MCF 10A (cell line): ENCODE measurements at regions of chr2 and their contacts with region 1.

Region 1: DNA sequence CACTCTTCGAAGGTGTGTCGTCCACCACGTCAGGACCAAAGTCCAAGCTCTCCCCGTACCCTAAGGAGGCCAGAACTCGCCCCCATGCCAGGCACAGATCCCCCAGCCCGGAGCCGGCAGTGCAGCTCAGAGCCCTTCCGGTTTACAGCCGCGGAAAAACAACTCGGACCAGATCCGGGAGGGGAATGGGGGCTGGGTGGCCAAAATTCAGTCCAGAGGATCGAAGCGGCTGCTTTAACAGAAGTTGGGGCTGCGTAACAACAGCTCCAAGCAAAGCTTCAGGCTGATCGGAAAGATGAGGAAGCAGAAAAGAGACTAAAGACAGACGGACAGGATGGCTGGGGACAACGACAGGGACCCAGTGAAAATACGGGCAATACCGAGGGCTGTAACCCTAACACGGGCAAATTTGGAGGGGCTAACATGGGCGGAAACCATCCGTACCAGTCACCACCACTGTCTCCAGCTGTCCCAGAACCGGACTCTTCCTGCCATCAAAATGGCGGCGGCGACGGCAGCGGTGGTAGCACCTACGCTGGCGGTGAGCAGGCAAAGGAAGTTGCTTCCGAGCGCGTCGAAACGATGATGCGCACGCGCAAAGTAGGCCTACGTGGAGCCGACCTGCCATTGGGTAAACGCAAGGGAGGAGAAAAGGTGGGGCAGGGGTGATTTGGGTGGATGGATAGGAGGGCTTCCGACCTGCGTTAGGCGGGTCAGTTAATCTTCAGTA is at the start of gene MMADHC:
- DNase-seq: peak; percentile 95
- H3K4me3 Mint-ChIP-seq: peak within 1 kb of the TSS; percentile 93
- H3K27ac Mint-ChIP-seq: peak within 1 kb of the TSS; percentile 99
- H3K4me1 Mint-ChIP-seq: peaks cover 21% of the 10 kb centered on the region
- H3K27me3 Mint-ChIP-seq: no peaks in the 10 kb centered on the region
- CTCF ChIP-seq: no peak
- total RNA-seq, gene MMADHC: 151 and 156 TPM in 2 replicates

Region 2: DNA sequence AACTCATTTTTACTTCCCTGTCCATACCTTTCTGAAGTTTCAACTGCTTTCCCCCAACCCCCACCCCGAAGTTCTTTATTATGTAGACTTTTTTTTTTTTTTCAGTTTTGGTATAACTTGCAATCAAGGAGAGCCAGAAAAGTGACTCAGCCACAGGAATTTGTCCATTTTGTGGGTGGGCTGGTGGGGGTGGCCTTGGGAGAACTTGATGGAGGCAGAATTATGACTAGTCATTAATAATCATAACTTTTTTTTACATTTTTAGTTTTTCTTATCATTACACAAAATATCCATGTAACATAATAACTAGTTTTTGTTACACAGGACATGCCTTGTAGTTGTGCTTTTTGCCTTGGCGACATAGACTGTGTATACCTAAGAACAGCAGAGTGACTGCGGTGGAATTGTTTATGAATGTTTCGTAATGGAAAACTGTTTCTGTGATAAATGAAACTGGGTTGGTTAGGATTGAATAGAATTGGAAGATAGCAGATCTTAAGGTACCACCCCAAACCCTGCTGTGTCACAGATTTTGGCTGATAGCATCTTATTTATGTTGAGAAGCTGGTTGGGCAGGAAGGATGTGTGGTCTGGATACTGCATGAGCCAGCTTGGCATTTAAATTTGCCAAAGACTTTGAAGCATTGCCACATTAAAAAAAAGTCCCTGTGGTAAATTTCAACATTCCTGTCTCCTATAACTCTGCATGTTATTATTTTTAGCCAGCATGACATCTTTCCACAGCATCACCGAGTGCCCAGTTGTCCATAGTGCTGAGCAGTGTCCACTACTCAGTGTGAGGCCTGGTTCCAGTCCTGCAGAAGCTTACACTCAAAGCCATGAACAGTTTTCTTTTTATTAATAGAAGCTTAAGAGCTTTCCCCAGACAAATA is 518.1 kb before region 1 on chr2:
- CTCF ChIA-PET with region 1: no interaction called
- POLR2A ChIA-PET with region 1: no interaction called
- intact Hi-C with region 1: no loop called
- DNase-seq: peak; percentile 59
- H3K4me3 Mint-ChIP-seq: no peak overlapping the region
- H3K27ac Mint-ChIP-seq: no peak overlapping the region
- H3K4me1 Mint-ChIP-seq: peaks cover 13% of the 10 kb centered on the region
- H3K27me3 Mint-ChIP-seq: no peaks in the 10 kb centered on the region
- CTCF ChIP-seq: no peak

Region 3: DNA sequence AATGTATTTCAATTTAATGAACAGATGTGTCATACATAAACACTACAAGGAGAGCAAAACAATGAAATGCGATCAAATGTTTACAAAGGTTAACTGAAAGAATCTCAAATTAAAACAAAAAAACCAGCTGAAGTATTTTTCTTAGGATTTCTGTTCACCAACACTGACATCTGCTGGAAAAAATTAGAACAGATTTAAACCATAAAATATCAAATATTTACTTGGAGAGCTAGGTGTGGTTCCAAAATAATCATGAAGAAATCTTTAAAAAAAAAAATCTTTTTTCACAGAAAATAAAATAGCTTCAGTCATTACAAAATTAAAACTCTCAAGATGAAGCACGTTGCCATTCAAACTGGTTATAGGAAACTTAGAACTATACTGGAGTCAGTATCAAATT is 13.6 kb before region 1 on chr2:
- CTCF ChIA-PET with region 1: interaction called, 7 read pairs
- POLR2A ChIA-PET with region 1: interaction called, 16 read pairs
- intact Hi-C with region 1: no loop called
- DNase-seq: no peak
- H3K4me3 Mint-ChIP-seq: no peak overlapping the region
- H3K27ac Mint-ChIP-seq: no peak overlapping the region
- H3K4me1 Mint-ChIP-seq: peaks cover 6% of the 10 kb centered on the region
- H3K27me3 Mint-ChIP-seq: no peaks in the 10 kb centered on the region
- CTCF ChIP-seq: peak; percentile 35

Region 4: GRCh38 chr2:149679286-149679685 is 91.9 kb after region 1 on chr2:
- CTCF ChIA-PET with region 1: no interaction called
- POLR2A ChIA-PET with region 1: no interaction called
- intact Hi-C with region 1: no loop called
- DNase-seq: peak; percentile 43
- H3K4me3 Mint-ChIP-seq: no peak overlapping the region
- H3K27ac Mint-ChIP-seq: no peak overlapping the region
- H3K4me1 Mint-ChIP-seq: no peaks in the 10 kb centered on the region
- H3K27me3 Mint-ChIP-seq: no peaks in the 10 kb centered on the region
- CTCF ChIP-seq: no peak